ENCODE measurements at regions of chr9 and their contacts with region 1.

Region 1: GRCh38 chr9:69035438-69036308 is at the start of gene FXN:
- DNase-seq: peak; percentile 38
- ATAC-seq: peak; percentile 98
- H3K4me3 ChIP-seq: peak within 1 kb of the TSS; percentile 96
- H3K27ac ChIP-seq: peak within 1 kb of the TSS; percentile 72
- H3K4me1 ChIP-seq: peaks cover 6% of the 10 kb centered on the region
- H3K27me3 ChIP-seq: no peaks in the 10 kb centered on the region
- CTCF ChIP-seq: peak; percentile 96 to 98 (median 98)
- EP300 ChIP-seq: no peak
- POLR2A ChIP-seq: peak; percentile 84
- RAD21 ChIP-seq: peak; percentile 67
- polyA plus RNA-seq, gene FXN: 21.0 to 22.3 TPM

Region 2: GRCh38 chr9:68841276-68842052 is 194.2 kb before region 1 on chr9:
- CTCF ChIA-PET with region 1: no interaction called
- POLR2A ChIA-PET with region 1: no interaction called
- RAD21 ChIA-PET with region 1: no interaction called
- SMC1A ChIA-PET with region 1: no interaction called
- in situ Hi-C with region 1: no loop called
- intact Hi-C with region 1: no loop called
- DNase-seq: no peak
- ATAC-seq: no peak
- H3K4me3 ChIP-seq: no peak overlapping the region
- H3K27ac ChIP-seq: no peak overlapping the region
- H3K4me1 ChIP-seq: peaks cover 13% of the 10 kb centered on the region
- H3K27me3 ChIP-seq: no peaks in the 10 kb centered on the region
- CTCF ChIP-seq: no peak
- EP300 ChIP-seq: no peak
- POLR2A ChIP-seq: no peak
- RAD21 ChIP-seq: no peak

Region 3: DNA sequence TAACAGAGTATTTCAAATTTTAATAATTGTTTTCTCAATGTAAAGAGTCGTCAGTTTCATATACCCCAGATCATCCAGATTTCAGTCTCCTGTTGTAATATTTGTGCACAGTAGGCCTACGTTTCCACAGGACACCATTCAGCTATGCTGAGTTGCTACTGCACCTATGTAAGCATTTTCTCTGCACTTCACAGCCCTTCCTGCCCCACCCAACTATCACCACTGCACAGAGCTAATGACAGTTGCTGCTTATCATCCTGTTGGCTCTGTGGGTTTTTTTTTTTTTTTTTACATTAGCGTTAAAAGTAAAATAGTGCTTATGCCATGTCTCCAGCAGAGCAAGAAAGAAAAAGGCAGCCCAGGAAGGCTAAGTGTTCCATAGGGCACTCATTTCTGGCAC is 15.9 kb before region 1 on chr9:
- CTCF ChIA-PET with region 1: interaction called, 10 read pairs
- POLR2A ChIA-PET with region 1: no interaction called
- RAD21 ChIA-PET with region 1: no interaction called
- SMC1A ChIA-PET with region 1: no interaction called
- in situ Hi-C with region 1: no loop called
- intact Hi-C with region 1: no loop called
- DNase-seq: no peak
- ATAC-seq: no peak
- H3K4me3 ChIP-seq: no peak overlapping the region
- H3K27ac ChIP-seq: no peak overlapping the region
- H3K4me1 ChIP-seq: no peaks in the 10 kb centered on the region
- H3K27me3 ChIP-seq: no peaks in the 10 kb centered on the region
- CTCF ChIP-seq: no peak
- EP300 ChIP-seq: no peak
- POLR2A ChIP-seq: no peak
- RAD21 ChIP-seq: no peak

Region 4: DNA sequence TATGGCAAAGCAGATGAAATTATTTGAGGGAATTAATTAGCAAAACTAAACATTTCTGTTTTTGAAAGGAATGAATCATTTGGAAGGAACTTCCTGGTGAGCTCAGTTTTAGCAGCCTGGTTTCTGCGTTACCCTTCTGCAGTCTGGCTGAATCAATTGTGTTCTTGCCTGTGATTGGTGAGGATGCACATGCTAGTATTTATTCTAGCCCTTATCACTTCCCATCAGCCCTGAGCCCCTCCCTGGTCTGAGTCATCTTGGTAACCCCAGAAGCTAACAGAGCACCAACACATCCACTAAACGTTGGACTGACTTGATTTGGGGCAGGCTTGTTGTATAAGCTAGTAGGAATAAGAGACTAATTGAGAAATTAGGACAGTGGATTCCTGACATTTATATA is 145.0 kb after region 1 on chr9:
- CTCF ChIA-PET with region 1: interaction called, 14 read pairs
- POLR2A ChIA-PET with region 1: no interaction called
- RAD21 ChIA-PET with region 1: interaction called, 3 read pairs
- SMC1A ChIA-PET with region 1: interaction called, 6 read pairs
- in situ Hi-C with region 1: no loop called
- intact Hi-C with region 1: no loop called
- DNase-seq: no peak
- ATAC-seq: peak; percentile 51
- H3K4me3 ChIP-seq: no peak overlapping the region
- H3K27ac ChIP-seq: no peak overlapping the region
- H3K4me1 ChIP-seq: peaks cover 18% of the 10 kb centered on the region
- H3K27me3 ChIP-seq: no peaks in the 10 kb centered on the region
- CTCF ChIP-seq: no peak
- EP300 ChIP-seq: no peak
- POLR2A ChIP-seq: no peak
- RAD21 ChIP-seq: no peak

Region 5: DNA sequence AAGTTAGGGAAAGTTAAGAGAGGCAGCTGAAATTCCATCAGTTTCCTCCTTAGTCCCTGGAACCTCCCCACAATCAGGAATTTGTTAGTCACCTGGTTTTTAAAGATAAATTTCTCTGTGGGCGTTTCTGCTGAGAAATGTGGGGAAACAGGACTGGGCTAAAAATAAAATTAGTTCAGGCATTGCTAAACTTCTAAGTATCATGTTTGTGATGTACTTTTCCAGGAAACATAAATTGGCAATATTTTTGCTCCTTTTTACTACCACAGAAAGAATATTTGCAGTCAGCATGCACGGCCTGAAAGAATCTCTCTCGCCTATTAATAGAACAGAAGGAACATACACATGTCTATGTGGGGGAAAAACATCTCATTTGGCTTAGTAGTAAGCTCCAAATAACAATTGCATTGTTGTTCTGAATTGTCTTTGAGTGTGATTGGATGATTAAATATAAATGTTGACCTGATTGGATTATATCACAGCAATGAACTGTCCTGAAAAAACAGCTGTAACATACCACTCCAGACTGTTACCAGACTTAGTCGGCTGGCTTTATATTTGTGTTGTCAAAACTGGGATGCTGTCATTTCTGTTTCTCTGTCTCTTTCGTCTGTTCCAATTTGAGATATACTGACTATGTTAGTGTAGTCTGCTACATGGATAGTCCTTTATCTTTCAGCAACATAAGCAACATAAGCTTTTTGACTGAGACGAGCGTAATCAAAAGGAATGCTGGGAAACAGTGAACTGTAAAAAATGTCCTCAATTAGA is 151.4 kb after region 1 on chr9:
- CTCF ChIA-PET with region 1: interaction called, 58 read pairs
- POLR2A ChIA-PET with region 1: no interaction called
- RAD21 ChIA-PET with region 1: interaction called, 19 read pairs
- SMC1A ChIA-PET with region 1: interaction called, 10 read pairs
- in situ Hi-C with region 1: no loop called
- intact Hi-C with region 1: no loop called
- DNase-seq: no peak
- ATAC-seq: no peak
- H3K4me3 ChIP-seq: no peak overlapping the region
- H3K27ac ChIP-seq: no peak overlapping the region
- H3K4me1 ChIP-seq: peaks cover 20% of the 10 kb centered on the region
- H3K27me3 ChIP-seq: no peaks in the 10 kb centered on the region
- CTCF ChIP-seq: no peak
- EP300 ChIP-seq: no peak
- POLR2A ChIP-seq: no peak
- RAD21 ChIP-seq: no peak